ENCODE measurements at regions of chr1 and their contacts with region 1.

Region 1: GRCh38 chr1:30657759-30658253 is 65.6 kb downstream of the MATN1 start:
- DNase-seq: no peak
- ATAC-seq: no peak

Region 2: DNA sequence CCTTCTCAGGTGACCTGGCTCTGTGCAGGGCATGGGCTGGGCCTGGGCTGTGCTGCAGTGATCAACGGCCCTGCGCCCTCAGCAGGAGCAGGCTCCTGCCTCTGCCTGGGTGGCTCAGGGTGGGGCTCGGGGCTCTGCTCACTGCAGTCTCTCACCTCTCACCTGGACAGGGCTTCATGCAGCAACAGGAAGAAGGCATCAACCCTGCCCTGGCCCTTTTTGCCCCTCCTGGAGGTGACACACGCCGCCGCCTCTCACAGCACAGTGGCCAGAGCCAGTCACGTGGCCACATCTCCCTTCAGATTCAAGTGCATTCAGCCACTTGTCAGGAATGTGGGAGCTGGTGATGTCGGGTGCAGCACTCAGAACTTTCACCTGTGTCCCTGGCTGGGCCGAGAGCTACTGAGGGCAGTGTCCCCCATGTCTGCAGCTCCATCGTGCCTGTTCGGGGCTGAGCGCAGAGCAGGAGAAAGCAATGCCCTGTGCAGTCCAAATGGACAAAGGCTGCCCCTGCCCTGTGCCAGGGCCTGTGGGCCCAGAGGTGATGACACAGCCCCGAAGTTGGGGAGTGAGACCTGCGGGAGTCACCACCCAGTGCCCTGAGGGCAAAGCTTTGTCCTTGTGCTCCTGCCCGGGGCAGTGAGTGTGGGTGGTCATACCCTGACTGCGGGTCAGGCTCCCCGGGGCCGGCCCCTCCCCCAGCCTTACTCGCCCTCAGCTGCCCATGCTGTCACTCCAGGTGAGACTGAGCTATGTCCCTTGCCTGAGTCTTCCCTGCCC is 1107.5 kb before region 1 on chr1:
- intact Hi-C with region 1: loop called (anchors 5 kb)
- DNase-seq: no peak
- ATAC-seq: no peak